B cell (primary cell): ENCODE measurements at regions of chr17 and their contacts with region 1.

Region 1: DNA sequence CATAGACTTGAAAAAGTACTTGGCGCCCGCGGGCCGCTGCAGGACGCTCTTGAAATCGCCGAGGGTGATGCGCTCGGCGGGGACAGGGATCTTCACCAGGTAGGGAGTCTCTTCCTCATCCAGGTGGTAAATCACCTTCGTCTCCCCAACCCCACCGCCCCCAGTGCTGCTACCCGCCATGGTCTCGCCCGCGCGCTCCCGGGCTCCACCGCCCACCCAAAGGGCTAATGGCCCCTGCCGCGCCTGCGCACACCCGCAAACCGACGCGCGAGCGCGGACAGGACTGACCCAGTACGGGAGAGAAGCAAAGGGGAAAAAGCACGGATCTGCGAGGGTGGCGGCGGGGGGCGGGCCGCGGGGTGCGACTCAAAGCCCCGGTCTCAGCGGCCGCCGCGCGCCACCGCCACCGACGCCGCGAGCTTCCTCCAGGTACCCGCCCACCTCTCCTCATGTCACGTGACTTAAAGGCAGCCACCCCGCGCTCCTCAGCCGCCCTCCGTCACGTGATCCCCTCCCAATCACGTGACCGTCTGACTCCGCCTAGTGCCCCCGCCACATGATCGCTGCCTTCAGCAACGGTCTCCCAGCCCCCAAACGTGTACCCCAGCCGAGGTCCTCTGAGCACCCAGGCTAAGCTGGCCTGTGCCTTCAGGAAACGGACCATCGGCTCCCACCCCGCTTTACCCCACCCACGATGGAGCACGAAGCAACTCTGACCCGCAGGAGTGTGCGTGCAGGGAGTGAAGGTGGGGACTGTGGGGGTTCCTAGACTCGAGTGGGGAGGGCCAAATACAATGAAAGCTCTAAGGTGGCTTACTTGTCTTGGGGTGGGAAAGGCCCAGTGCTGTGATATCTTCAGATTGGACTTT is at the start of gene DVL2:
- DNase-seq: peak; percentile 97
- ATAC-seq: peak; percentile 50
- H3K4me3 ChIP-seq: peak within 1 kb of the TSS; percentile 80 to 96 (median 92)
- H3K4me3 Mint-ChIP-seq: peak within 1 kb of the TSS; percentile 97
- H3K27ac ChIP-seq: peak within 1 kb of the TSS; percentile 68 to 88
- H3K27ac Mint-ChIP-seq: peak within 1 kb of the TSS; percentile 99
- H3K4me1 ChIP-seq: peaks cover 31 to 42% of the 10 kb centered on the region in 2 donors
- H3K4me1 Mint-ChIP-seq: peaks cover 44% of the 10 kb centered on the region
- H3K27me3 ChIP-seq: no peaks in the 10 kb centered on the region
- H3K27me3 Mint-ChIP-seq: no peaks in the 10 kb centered on the region
- CTCF ChIP-seq: no peak
- total RNA-seq, gene DVL2: 104 and 116 TPM in 2 replicates

Region 2: DNA sequence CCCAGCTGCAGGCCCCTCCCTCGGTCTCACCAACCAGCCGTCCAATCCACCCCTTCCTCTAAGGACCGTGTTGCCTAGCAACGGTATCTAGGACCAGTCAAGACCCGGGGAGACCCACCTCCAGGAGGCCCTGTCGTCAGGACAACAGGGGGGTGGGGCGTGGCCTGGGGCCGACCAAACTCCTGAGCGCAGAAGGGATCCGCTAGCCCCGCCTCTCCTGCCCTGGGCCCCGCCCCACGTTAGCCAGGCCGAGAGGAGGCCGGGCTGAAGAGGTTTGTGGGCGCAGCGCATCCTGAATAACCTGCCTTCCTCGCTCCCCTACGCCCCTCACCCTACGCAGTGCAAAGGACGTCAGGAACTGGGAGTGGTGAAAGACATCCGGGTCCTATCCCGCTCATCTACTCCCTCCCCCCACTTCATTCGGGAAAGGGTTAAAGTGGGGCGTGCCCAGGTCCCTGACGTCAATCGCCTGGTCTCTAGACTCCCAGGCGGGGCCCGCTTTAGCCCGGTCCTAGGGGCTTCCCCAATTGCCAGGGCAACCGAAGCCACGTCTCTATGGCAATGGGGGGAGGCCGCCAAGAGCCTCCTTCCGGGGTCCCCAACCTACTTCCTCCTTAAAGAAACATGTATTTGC is 29.4 kb before region 1 on chr17:
- CTCF ChIA-PET with region 1: no interaction called
- POLR2A ChIA-PET with region 1: interaction called, 3 read pairs
- intact Hi-C with region 1: loop called (anchors 1 kb)
- DNase-seq: peak; percentile 99
- ATAC-seq: peak; percentile 85
- H3K4me3 ChIP-seq: peak overlapping the region in 4 of 5 experiments; percentile 49 to 65 (median 55)
- H3K4me3 Mint-ChIP-seq: peak overlapping the region; percentile 82
- H3K27ac ChIP-seq: peak overlapping the region; percentile 86 to 93
- H3K27ac Mint-ChIP-seq: peak overlapping the region; percentile 91
- H3K4me1 ChIP-seq: peaks cover 17 to 25% of the 10 kb centered on the region in 2 donors
- H3K4me1 Mint-ChIP-seq: peaks cover 28% of the 10 kb centered on the region
- H3K27me3 ChIP-seq: no peaks in the 10 kb centered on the region
- H3K27me3 Mint-ChIP-seq: peaks cover under 1% of the 10 kb centered on the region
- CTCF ChIP-seq: no peak

Region 3: DNA sequence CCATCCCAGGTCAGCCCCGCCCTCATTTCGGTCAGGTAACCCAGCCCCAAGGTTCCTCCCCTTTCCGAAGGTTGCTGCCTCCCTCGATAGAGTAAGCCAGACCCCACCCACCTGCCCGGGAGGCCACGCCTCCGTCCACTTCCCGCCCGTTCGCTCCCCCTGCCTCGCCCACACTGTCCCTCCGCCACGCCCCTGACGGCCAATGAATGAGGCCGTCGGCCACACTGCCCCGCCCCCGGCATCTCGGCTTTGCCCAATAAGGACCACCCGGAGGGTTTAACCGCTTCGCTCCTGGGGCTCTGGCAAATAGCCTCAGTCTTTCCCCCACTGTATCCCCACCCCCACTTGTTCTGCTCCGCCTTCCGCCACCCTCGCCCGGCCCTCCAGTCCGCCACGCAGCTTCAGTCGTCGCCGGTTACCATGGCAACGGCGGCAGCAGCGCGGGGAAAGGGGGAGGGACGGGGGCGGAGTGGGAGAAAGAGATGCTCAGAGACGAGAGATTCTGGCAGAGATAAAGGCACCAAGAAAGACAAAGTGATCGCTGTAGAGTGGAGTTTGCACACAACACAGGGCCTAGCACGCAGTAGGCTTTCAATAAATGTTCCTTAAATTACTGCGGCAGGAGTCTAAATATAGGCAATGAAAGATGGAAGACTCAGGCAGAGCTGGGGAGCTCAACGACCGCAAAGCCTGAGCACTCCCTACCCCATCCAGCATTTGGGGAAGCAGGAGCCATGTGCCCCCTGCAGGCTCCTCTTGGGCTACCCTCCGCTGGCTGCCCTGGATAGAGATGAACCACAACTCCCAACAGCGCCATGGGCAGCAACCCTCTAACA is 19.8 kb before region 1 on chr17:
- CTCF ChIA-PET with region 1: interaction called, 36 read pairs
- POLR2A ChIA-PET with region 1: interaction called, 157 read pairs
- intact Hi-C with region 1: loop called (anchors 1 kb)
- DNase-seq: peak; percentile 99
- ATAC-seq: peak; percentile 85
- H3K4me3 ChIP-seq: peak overlapping the region; percentile 39 to 66 (median 53)
- H3K4me3 Mint-ChIP-seq: peak overlapping the region; percentile 97
- H3K27ac ChIP-seq: peak overlapping the region; percentile 77 to 90
- H3K27ac Mint-ChIP-seq: peak overlapping the region; percentile 99
- H3K4me1 ChIP-seq: peaks cover 25 to 50% of the 10 kb centered on the region in 2 donors
- H3K4me1 Mint-ChIP-seq: peaks cover 49% of the 10 kb centered on the region
- H3K27me3 ChIP-seq: peaks cover 0 to 4% (median 0%) of the 10 kb centered on the region in 4 experiments
- H3K27me3 Mint-ChIP-seq: peaks cover 5% of the 10 kb centered on the region
- CTCF ChIP-seq: peak; percentile 44

Region 4: DNA sequence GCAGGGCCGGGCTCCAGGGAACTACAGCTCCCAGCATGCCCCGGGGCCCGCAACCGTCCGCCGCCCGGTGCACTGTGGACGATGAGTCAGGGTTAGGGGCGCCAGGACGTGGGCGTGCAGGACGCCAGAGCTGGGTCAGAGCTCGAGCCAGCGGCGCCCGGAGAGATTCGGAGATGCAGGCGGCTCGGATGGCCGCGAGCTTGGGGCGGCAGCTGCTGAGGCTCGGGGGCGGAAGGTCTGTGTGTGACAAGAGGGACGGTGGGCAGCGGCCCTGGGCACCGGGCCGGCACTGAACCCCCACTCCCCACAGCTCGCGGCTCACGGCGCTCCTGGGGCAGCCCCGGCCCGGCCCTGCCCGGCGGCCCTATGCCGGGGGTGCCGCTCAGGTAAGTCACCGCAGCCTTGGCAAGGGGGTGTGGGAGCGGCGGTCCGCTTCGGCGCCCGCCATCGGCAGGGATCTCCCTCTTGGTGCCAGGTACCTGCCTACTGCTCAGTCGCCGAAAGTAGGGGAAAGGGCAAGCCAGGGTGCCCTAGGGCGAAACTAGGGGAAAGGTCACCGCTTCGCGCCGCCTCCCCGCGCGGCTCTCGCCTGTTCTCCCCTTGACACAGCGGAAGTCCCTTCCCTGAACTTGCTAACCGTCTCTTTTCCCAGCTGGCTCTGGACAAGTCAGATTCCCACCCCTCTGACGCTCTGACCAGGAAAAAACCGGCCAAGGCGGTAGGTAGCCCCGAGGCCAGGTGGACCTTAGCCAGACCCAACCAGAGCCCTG is 14.3 kb before region 1 on chr17 and contains the starts of genes ACADVL and DLG4:
- CTCF ChIA-PET with region 1: interaction called, 36 read pairs
- POLR2A ChIA-PET with region 1: interaction called, 157 read pairs
- intact Hi-C with region 1: loop called (anchors 1 kb)
- DNase-seq: peak; percentile 78
- ATAC-seq: peak; percentile 76
- H3K4me3 ChIP-seq: peak within 1 kb of the TSS; percentile 31 to 86 (median 80)
- H3K4me3 Mint-ChIP-seq: peak within 1 kb of the TSS; percentile 97
- H3K27ac ChIP-seq: peak within 1 kb of the TSS; percentile 42 to 78
- H3K27ac Mint-ChIP-seq: peak within 1 kb of the TSS; percentile 93
- H3K4me1 ChIP-seq: peaks cover 20 to 47% of the 10 kb centered on the region in 2 donors
- H3K4me1 Mint-ChIP-seq: peaks cover 48% of the 10 kb centered on the region
- H3K27me3 ChIP-seq: no peaks in the 10 kb centered on the region
- H3K27me3 Mint-ChIP-seq: no peaks in the 10 kb centered on the region
- CTCF ChIP-seq: no peak
- total RNA-seq, gene ACADVL: 640 and 655 TPM in 2 replicates
- total RNA-seq, gene DLG4: 12.0 and 12.5 TPM in 2 replicates

Region 5: GRCh38 chr17:7252176-7253043 is 18.1 kb after region 1 on chr17 and contains the start of gene ELP5:
- CTCF ChIA-PET with region 1: interaction called, 6 read pairs
- POLR2A ChIA-PET with region 1: interaction called, 26 read pairs
- intact Hi-C with region 1: no loop called
- DNase-seq: peak; percentile 100
- ATAC-seq: peak; percentile 64
- H3K4me3 ChIP-seq: peak within 1 kb of the TSS; percentile 69 to 90 (median 78)
- H3K4me3 Mint-ChIP-seq: peak within 1 kb of the TSS; percentile 98
- H3K27ac ChIP-seq: peak within 1 kb of the TSS; percentile 98 to 100
- H3K27ac Mint-ChIP-seq: peak within 1 kb of the TSS; percentile 100
- H3K4me1 ChIP-seq: peaks cover 30 to 33% of the 10 kb centered on the region in 2 donors
- H3K4me1 Mint-ChIP-seq: peaks cover 44% of the 10 kb centered on the region
- H3K27me3 ChIP-seq: no peaks in the 10 kb centered on the region
- H3K27me3 Mint-ChIP-seq: no peaks in the 10 kb centered on the region
- CTCF ChIP-seq: no peak
- total RNA-seq, gene ELP5: 42.2 and 48.0 TPM in 2 replicates